Upper lobe of right lung (tissue), 1 donor: ENCODE measurements at regions of chr17 and their contacts with region 1.

Region 1: DNA sequence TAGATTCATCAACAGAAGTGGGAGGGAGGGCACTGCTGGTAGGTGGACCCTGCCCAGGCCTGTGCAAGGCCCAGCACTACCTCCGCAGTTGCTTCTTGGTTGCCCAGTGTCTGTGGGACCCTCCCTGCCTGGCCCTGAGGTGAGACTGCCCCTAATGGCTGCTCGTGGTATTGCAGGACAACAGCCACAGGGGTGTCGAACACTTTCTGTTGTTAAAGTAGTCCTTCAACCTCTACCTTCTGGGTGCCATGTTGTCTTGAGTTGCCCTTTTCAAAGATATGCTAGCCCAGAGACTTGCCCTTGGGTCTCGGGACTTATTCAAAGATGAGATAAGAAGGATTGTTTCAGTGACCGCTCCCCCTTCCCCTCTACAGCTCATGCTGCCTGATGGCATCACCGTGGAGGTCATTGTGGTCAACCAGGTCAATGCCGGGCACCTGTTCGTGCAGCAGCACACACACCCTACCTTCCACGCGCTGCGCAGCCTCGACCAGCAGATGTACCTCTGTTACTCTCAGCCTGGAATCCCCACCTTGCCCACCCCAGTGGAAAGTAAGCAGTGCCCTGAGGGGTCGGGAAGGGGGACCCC is 29.1 kb downstream of the AKAP1 start:
- DNase-seq: no peak
- ATAC-seq: peak; percentile 74
- H3K4me3 ChIP-seq: no peak overlapping the region
- H3K27ac ChIP-seq: no peak overlapping the region
- H3K4me1 ChIP-seq: peaks cover 12% of the 10 kb centered on the region
- H3K27me3 ChIP-seq: no peaks in the 10 kb centered on the region
- CTCF ChIP-seq: peak; percentile 83

Region 2: GRCh38 chr17:56897646-56898424 is 216.3 kb before region 1 on chr17:
- intact Hi-C with region 1: no loop called
- DNase-seq: no peak
- ATAC-seq: no peak
- H3K4me3 ChIP-seq: no peak overlapping the region
- H3K27ac ChIP-seq: no peak overlapping the region
- H3K4me1 ChIP-seq: no peaks in the 10 kb centered on the region
- H3K27me3 ChIP-seq: no peaks in the 10 kb centered on the region
- CTCF ChIP-seq: no peak

Region 3: GRCh38 chr17:57009737-57010445 is 104.3 kb before region 1 on chr17:
- intact Hi-C with region 1: loop called (anchors 10 kb)
- DNase-seq: no peak
- ATAC-seq: peak; percentile 91
- H3K4me3 ChIP-seq: no peak overlapping the region
- H3K27ac ChIP-seq: no peak overlapping the region
- H3K4me1 ChIP-seq: peaks cover 3% of the 10 kb centered on the region
- H3K27me3 ChIP-seq: no peaks in the 10 kb centered on the region
- CTCF ChIP-seq: peak; percentile 73

Region 4: GRCh38 chr17:57243171-57243948 is 129.2 kb after region 1 on chr17:
- intact Hi-C with region 1: no loop called
- DNase-seq: peak; percentile 78
- ATAC-seq: peak; percentile 99
- H3K4me3 ChIP-seq: no peak overlapping the region
- H3K27ac ChIP-seq: no peak overlapping the region
- H3K4me1 ChIP-seq: no peaks in the 10 kb centered on the region
- H3K27me3 ChIP-seq: peaks cover 11% of the 10 kb centered on the region
- CTCF ChIP-seq: peak; percentile 98